Heart right ventricle (tissue), 16 donors: ENCODE measurements at regions of chrX and their contacts with region 1.

Region 1: DNA sequence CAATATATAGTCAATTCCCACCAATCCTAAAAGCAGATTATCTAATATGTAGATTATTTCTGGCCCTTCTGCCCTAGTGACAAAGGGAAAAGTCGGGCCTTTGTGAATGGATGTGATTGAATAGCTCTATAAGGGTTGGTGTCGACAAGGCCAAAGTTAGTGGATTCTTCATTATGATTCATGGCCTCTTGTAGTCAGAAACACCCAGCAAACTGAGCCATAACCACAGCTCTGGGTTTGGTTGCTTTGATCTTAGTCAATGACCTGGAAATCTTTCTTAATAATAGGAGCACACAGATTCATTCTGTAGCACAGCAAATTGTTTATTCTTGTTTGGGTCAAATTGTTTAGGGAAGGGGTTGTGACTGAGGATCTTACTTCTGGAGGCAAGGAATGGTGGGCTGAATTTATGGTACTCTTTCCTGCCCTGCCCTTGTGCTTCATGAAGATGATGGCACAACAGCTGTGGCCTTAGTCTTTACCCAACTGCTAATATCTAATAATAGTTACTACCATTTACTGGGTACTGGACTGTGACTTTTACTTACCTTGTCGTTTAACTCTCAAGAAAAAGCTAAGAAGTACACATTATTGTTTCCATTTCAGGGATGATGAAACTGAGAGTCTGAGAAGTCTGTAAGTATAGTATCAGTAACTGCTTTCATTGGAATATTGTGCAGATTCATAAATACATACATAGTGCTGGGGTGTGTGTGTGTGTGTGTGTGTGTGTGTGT is 74.0 kb downstream of the AFF2 start:
- DNase-seq: no peak
- ATAC-seq: no peak
- H3K4me3 ChIP-seq: no peak overlapping the region
- H3K27ac ChIP-seq: no peak overlapping the region
- H3K4me1 ChIP-seq: no peaks in the 10 kb centered on the region
- H3K27me3 ChIP-seq: no peaks in the 10 kb centered on the region
- CTCF ChIP-seq: no peak

Region 2: DNA sequence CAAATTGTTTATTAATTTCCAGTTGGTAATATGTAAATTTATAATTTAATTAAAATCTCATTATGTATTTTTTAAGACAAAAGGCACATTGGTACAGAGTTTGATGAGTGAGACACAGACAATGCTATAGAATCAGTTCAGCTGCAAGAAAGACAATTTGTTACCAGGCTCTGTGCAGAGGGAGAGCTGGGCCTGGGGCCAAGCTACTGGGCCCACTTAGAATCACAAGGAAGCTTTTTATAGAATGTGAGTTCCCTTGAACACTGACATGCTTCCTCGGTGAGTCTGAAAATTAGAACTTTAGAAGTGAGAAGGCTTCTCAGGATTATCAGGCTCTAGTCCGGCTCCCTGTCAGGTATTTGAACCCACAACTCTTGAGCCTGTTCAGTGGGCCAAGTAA is 55.0 kb after region 1 on chrX:
- intact Hi-C with region 1: no loop called
- DNase-seq: peak in 1 of 2 donors; percentile 10
- ATAC-seq: no peak
- H3K4me3 ChIP-seq: no peak overlapping the region
- H3K27ac ChIP-seq: no peak overlapping the region
- H3K4me1 ChIP-seq: no peaks in the 10 kb centered on the region
- H3K27me3 ChIP-seq: no peaks in the 10 kb centered on the region
- CTCF ChIP-seq: no peak

Region 3: DNA sequence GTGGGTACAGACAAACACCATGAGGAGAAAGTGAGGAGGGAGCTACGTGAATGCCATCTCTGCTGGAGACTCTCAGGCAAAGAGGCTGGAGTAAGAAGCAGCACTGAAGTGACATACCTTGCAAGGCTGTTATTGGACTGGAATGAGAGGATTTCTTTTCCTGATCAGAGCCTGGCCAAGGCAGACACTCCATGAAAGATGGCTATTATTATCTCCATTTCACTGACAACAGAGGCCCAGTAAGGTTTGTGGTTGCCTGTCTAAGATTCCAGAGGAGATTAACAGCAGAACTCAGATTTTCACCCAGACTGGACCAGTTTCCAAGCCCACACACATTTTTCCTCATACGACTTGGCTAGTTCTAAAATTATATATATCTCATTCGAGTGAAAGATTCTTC is 1525.9 kb after region 1 on chrX:
- intact Hi-C with region 1: loop called in 1 of 10 experiments (anchors 5 kb)
- DNase-seq: no peak
- ATAC-seq: no peak
- H3K4me3 ChIP-seq: no peak overlapping the region
- H3K27ac ChIP-seq: no peak overlapping the region
- H3K4me1 ChIP-seq: peaks cover 0 to 6% (median 0%) of the 10 kb centered on the region in 9 donors
- H3K27me3 ChIP-seq: no peaks in the 10 kb centered on the region
- CTCF ChIP-seq: no peak